CD14-positive monocyte (primary cell): ENCODE measurements at regions of chr15 and their contacts with region 1.

Region 1: GRCh38 chr15:90362936-90363212 is 10.8 kb downstream of the ZNF774 start:
- DNase-seq: peak in 1 of 3 donors; percentile 32
- H3K4me3 ChIP-seq: no peak overlapping the region
- H3K4me3 Mint-ChIP-seq: no peak overlapping the region
- H3K27ac ChIP-seq: no peak overlapping the region
- H3K27ac Mint-ChIP-seq: peak overlapping the region in 1 of 7 donors; percentile 44
- H3K4me1 ChIP-seq: peaks cover 30% of the 10 kb centered on the region in 2 donors
- H3K4me1 Mint-ChIP-seq: peaks cover 34% of the 10 kb centered on the region
- H3K27me3 ChIP-seq: no peaks in the 10 kb centered on the region
- H3K27me3 Mint-ChIP-seq: peaks cover 0 to 2% (median 2%) of the 10 kb centered on the region in 3 donors
- CTCF ChIP-seq: no peak

Region 2: GRCh38 chr15:90286678-90287077 is 76.2 kb before region 1 on chr15:
- intact Hi-C with region 1: no loop called
- DNase-seq: peak in 1 of 3 donors; percentile 27
- H3K4me3 ChIP-seq: no peak overlapping the region
- H3K4me3 Mint-ChIP-seq: no peak overlapping the region
- H3K27ac ChIP-seq: no peak overlapping the region
- H3K27ac Mint-ChIP-seq: no peak overlapping the region
- H3K4me1 ChIP-seq: peaks cover 0 to 4% of the 10 kb centered on the region in 2 donors
- H3K4me1 Mint-ChIP-seq: peaks cover 3% of the 10 kb centered on the region
- H3K27me3 ChIP-seq: no peaks in the 10 kb centered on the region
- H3K27me3 Mint-ChIP-seq: peaks cover 0 to 4% (median 0%) of the 10 kb centered on the region in 3 donors
- CTCF ChIP-seq: peak; percentile 57

Region 3: DNA sequence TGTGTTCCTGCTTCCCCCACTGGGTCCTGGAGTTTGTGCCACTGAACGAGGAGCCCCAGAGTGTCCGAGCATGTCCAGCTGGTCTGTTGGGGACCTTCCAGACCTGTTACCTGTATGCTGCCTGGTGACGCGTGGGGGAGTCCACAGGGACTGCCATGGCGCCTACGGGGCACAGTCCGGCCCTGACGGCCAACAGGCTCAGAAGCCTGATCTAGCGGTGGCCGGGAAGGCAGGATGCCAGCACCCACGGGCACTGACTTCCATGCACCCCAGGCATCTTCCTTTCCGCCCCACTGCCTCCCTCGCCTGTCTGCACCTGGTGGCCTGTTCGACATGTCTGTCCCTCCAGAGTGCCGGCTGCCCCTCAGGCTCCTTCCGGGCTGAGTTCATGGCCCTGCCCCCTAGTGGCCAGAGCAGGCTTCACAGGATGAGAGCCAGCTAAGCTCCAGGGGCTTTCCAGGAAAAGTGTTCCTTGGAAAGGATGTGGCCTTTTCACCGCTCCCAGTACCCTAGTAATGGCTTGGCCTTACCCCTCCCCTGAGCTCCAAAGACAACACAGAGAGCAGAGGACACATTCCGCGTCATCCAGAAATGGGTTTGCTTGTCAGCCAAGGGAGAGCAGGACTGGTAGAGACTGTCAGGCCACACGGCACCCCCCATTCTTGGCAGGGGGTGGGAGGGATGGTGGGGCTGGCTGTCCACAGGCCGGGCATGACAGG is 61.7 kb before region 1 on chr15:
- intact Hi-C with region 1: no loop called
- DNase-seq: peak; percentile 35 to 65 (median 40)
- H3K4me3 ChIP-seq: no peak overlapping the region
- H3K4me3 Mint-ChIP-seq: no peak overlapping the region
- H3K27ac ChIP-seq: no peak overlapping the region
- H3K27ac Mint-ChIP-seq: no peak overlapping the region
- H3K4me1 ChIP-seq: peaks cover 4 to 6% of the 10 kb centered on the region in 2 donors
- H3K4me1 Mint-ChIP-seq: peaks cover 6% of the 10 kb centered on the region
- H3K27me3 ChIP-seq: no peaks in the 10 kb centered on the region
- H3K27me3 Mint-ChIP-seq: peaks cover 0 to 2% (median 0%) of the 10 kb centered on the region in 3 donors
- CTCF ChIP-seq: peak; percentile 93

Region 4: DNA sequence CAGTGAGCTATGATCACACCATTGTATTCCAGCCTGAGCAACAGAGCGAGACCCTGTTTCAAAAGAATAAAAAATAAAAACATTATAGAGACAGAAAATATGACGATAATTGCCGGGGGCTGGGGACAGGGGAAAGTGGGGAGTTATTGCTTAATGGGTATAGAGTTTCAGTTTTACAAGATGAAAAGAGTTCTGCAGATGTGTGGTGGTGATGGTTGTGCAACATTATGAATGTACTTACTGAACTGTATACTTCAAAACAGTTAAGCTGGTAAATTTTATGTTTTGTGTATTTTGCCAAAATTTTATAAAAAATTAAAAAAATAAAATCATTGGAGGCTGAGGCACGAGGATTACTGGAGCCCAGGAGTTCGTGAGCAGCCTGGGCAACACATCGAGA is 35.6 kb before region 1 on chr15:
- intact Hi-C with region 1: loop called in 1 of 2 experiments (anchors 5 kb)
- DNase-seq: peak in 2 of 3 donors; percentile 52 to 58
- H3K4me3 ChIP-seq: no peak overlapping the region
- H3K4me3 Mint-ChIP-seq: peak overlapping the region in 1 of 2 donors; percentile 27
- H3K27ac ChIP-seq: peak overlapping the region in 1 of 2 donors; percentile 20
- H3K27ac Mint-ChIP-seq: peak overlapping the region in 1 of 7 donors; percentile 50
- H3K4me1 ChIP-seq: peaks cover 25 to 29% of the 10 kb centered on the region in 2 donors
- H3K4me1 Mint-ChIP-seq: peaks cover 28% of the 10 kb centered on the region
- H3K27me3 ChIP-seq: no peaks in the 10 kb centered on the region
- H3K27me3 Mint-ChIP-seq: peaks cover 0 to 3% (median 3%) of the 10 kb centered on the region in 3 donors
- CTCF ChIP-seq: no peak

Region 5: DNA sequence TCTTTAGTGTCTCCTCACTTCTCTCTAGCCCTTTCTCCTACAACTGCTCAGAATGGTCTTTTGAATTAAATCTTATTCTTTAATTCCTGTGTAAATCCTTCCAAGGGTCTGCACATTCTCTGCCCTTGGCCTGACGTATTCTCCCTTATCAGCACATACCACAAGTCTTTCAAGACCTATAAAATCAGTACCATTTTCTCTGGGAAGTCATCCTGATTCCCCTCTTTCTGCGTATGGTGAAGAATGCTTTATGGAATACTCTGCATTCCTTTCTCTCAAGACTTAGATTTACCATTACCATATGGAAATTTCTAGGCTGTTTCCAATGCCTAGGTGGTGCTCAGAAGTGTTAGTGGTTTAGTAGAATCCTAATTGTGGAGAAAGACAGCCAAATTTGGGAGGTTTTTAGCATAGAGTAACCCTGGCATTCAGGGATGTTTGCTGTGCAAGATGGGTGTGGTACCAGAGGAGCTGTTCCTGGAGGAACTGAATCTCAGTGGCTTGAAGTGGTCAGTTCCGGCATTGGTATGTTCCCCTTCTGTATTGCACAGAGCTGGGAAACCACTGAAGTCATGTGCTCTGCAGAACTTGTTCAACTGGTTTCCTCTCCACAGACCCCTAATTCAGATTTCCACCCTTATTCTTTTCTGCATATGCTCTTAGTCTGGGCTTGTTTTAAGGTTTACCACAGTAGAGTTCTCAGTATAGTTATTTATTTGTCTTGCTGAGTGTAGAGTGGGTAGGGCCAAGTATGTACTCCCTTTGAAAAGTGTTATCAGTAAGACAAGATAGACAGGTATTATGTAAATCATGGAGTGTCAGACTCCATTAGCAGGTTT is 49.7 kb after region 1 on chr15:
- intact Hi-C with region 1: loop called in 1 of 2 experiments (anchors 10 kb)
- DNase-seq: peak; percentile 80 to 95 (median 93)
- H3K4me3 ChIP-seq: peak overlapping the region; percentile 19 to 67 (median 46)
- H3K4me3 Mint-ChIP-seq: peak overlapping the region; percentile 71 to 89
- H3K27ac ChIP-seq: peak overlapping the region; percentile 60 to 84
- H3K27ac Mint-ChIP-seq: peak overlapping the region; percentile 89 to 97 (median 97)
- H3K4me1 ChIP-seq: peaks cover 68 to 75% of the 10 kb centered on the region in 2 donors
- H3K4me1 Mint-ChIP-seq: peaks cover 84% of the 10 kb centered on the region
- H3K27me3 ChIP-seq: no peaks in the 10 kb centered on the region
- H3K27me3 Mint-ChIP-seq: peaks cover 0 to 3% (median 1%) of the 10 kb centered on the region in 3 donors
- CTCF ChIP-seq: no peak